Activated CD8-positive, alpha-beta memory T cell treated with anti-CD3 and anti-CD28 coated beads, Interleukin-2, amount 10 ng/mL, durations not matched to agents 7 days and 5 days (primary cell): ENCODE measurements at regions of chr5 and their contacts with region 1.

Region 1: GRCh38 chr5:154072414-154073171 is 33.8 kb downstream of the MFAP3 start:
- DNase-seq: peak; percentile 92
- ATAC-seq: peak; percentile 87
- H3K4me3 Mint-ChIP-seq: peak overlapping the region; percentile 38
- H3K27ac Mint-ChIP-seq: peak overlapping the region; percentile 84
- H3K4me1 Mint-ChIP-seq: peaks cover 55% of the 10 kb centered on the region
- H3K27me3 Mint-ChIP-seq: no peaks in the 10 kb centered on the region

Region 2: DNA sequence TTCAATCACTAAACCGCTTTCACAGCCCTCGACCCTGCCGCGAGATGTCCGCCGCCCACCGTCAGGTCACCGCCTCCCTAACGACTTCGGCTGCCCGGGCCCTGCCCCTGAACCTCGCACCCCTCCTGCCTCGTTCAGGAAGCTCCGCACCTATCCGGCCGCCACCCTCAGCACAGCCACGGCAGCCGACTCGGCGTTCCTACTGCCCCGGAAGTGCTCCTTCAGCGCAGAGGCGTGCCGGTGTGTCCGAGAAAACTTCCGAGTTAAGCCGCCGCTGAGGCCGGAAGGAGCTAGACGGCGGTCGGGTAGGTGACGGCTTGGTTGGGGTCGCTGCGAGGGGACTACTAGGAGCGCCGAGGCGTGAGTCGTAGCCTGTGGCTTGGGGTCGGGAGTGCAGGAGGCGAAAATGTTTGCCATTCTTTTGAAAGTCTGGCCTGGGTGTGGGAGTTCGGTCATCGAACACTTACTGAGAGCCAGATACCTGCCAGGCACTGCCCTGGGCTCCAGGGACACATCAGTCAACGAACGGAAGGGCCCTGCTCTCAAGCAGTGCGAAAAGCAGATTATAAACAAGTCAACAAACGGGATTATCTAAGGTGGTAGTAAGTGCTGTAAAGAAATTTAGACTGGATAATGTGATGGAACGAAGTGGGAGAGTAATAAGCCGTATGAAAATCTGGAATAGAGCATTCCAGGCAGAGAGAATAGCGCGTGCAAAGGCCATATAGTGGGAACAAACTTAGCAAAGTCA is 33.7 kb before region 1 on chr5 and contains the starts of genes FAM114A2 and MFAP3:
- CTCF ChIA-PET with region 1: interaction called, 10 read pairs
- DNase-seq: peak; percentile 95
- ATAC-seq: peak; percentile 99
- H3K4me3 Mint-ChIP-seq: peak within 1 kb of the TSS; percentile 93
- H3K27ac Mint-ChIP-seq: peak within 1 kb of the TSS; percentile 93
- H3K4me1 Mint-ChIP-seq: peaks cover 47% of the 10 kb centered on the region
- H3K27me3 Mint-ChIP-seq: no peaks in the 10 kb centered on the region
- total RNA-seq, gene FAM114A2: 22.3 to 27.0 TPM
- total RNA-seq, gene MFAP3: 23.3 to 26.1 TPM

Region 3: DNA sequence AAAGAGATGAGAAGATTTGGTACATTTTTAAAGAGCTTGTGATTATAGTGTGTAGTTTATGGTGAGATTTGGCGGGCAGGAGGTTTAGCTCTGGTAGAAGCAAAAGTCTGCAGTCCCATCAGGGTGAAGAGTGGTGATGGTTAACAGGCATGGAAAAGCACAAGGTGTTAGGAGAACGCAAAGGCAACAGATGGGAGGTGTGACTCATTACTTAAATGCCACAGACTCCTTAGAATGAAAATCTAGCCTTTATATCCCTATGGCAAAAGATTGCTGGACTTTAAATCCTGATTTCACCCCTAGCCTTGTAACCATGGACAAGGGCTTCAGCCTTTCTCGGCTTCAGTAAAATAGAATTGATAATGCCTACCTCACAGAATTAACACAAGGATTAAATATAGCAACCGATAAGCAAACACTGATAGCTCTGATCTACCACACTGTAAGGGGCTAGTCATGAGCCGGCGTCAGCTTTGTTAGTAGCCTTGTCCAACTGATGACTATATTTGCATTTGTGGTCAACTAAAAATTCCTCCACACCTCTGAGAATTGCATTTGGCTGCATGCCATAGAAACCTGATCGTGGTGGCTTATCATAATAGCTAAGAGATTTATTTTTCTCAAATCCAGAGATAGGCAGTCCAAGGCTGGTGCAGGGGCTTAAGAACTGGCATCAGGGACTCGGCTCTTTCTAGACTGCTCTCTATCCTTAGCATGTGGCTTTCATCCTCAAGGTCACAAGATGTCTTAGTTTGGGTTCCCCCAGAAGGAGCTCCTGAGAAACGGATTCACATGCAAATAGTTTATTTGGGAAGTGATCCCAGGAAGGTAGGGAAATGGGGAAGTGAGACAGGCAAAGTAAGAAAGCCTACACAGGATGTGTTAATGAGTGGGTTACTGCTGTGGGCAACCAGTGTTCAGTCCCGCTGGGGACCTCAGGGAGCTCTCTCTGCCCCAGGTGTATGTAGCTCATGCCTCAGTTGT is 14.2 kb before region 1 on chr5:
- CTCF ChIA-PET with region 1: interaction called, 26 read pairs
- DNase-seq: no peak
- ATAC-seq: peak; percentile 57
- H3K4me3 Mint-ChIP-seq: no peak overlapping the region
- H3K27ac Mint-ChIP-seq: no peak overlapping the region
- H3K4me1 Mint-ChIP-seq: peaks cover 23% of the 10 kb centered on the region
- H3K27me3 Mint-ChIP-seq: no peaks in the 10 kb centered on the region

Region 4: DNA sequence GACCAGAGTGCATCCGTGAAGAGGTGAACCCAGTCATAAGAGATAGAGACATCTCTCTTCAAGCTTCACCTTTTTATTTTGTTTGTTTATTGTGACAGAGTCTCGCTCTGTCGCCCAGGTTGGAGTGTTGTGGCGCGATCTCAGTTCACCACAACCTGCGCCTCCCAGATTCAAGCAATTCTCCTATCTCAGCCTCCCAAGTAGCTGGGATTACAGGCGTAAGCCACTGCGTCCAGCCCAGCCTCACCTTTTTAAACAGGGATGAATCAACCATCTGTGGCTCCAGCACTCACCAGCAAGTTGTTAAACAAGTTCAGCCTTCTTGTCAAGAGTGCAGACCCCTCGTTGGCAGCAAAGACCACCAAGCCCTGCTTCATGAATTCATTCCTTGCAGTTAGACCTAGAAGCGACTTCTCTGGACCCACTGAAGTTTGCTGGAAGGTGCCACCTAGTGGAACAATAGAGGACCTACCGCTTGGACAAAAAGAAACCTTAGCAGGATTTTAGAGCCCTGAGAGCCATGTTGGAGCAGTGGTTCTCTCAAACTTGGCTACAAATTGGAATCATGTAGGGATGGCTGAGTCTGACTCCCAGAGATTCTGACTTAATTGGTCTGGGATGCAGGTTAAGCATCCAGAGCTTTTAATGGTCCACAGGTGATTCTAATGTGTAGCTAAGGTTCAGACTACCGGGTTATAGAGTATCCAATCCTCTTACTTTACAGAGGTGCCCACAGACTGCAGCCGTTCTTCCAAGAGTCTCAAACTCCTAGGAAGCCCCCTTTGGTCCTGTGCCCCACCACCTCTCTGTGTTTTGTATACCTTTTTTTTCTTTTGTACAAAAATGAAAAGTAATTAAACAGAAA is 107.5 kb after region 1 on chr5:
- CTCF ChIA-PET with region 1: interaction called, 199 read pairs
- DNase-seq: peak; percentile 57
- ATAC-seq: peak; percentile 91
- H3K4me3 Mint-ChIP-seq: no peak overlapping the region
- H3K27ac Mint-ChIP-seq: no peak overlapping the region
- H3K4me1 Mint-ChIP-seq: peaks cover 15% of the 10 kb centered on the region
- H3K27me3 Mint-ChIP-seq: peaks cover 8% of the 10 kb centered on the region

Region 5: DNA sequence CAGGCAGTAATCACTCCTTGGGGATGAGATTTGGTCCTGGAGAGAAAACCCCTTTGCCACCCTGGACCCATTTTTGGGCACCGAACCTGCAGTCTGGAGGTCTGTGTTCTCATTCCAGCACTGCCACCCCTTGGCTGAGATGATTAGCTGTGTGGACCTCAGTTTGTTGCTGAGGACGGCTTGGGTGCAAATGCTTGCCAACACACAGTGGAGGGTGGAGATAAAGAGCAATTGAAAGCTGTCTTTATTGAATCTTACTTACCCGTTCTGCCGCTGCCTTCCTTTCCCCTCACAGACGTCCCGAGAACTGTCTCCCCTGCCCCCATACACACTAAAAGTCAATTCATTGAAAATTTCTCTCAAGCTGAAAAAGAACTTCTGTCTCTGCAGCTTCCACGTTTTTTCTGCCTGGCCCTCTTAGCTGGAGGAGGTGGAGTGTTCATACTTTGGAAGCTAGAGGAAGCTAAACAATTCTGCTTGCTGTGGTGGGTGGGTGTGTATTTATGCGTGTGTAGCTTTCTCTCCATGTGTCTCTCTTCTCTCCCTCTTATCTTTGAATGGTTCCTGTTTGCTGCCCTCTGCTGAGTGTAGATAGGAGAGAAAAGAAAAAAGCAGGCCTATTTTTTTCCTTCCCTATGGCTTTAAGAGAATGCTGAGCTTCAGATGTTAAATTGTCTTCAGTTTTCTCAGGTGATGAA is 124.5 kb after region 1 on chr5:
- CTCF ChIA-PET with region 1: interaction called, 119 read pairs
- DNase-seq: no peak
- ATAC-seq: peak; percentile 13
- H3K4me3 Mint-ChIP-seq: no peak overlapping the region
- H3K27ac Mint-ChIP-seq: peak overlapping the region; percentile 91
- H3K4me1 Mint-ChIP-seq: peaks cover 68% of the 10 kb centered on the region
- H3K27me3 Mint-ChIP-seq: no peaks in the 10 kb centered on the region

Region 6: GRCh38 chr5:154238776-154239481 is 166.3 kb after region 1 on chr5:
- CTCF ChIA-PET with region 1: interaction called, 43 read pairs
- DNase-seq: no peak
- ATAC-seq: no peak
- H3K4me3 Mint-ChIP-seq: no peak overlapping the region
- H3K27ac Mint-ChIP-seq: no peak overlapping the region
- H3K4me1 Mint-ChIP-seq: peaks cover 31% of the 10 kb centered on the region
- H3K27me3 Mint-ChIP-seq: no peaks in the 10 kb centered on the region

Region 7: GRCh38 chr5:154254896-154255295 is 182.3 kb after region 1 on chr5:
- CTCF ChIA-PET with region 1: no interaction called
- DNase-seq: no peak
- ATAC-seq: no peak
- H3K4me3 Mint-ChIP-seq: no peak overlapping the region
- H3K27ac Mint-ChIP-seq: no peak overlapping the region
- H3K4me1 Mint-ChIP-seq: no peaks in the 10 kb centered on the region
- H3K27me3 Mint-ChIP-seq: no peaks in the 10 kb centered on the region

Region 8: GRCh38 chr5:154405078-154405792 is 332.6 kb after region 1 on chr5:
- CTCF ChIA-PET with region 1: interaction called, 92 read pairs
- DNase-seq: peak; percentile 80
- ATAC-seq: peak; percentile 98
- H3K4me3 Mint-ChIP-seq: no peak overlapping the region
- H3K27ac Mint-ChIP-seq: no peak overlapping the region
- H3K4me1 Mint-ChIP-seq: peaks cover 7% of the 10 kb centered on the region
- H3K27me3 Mint-ChIP-seq: no peaks in the 10 kb centered on the region